ENCODE measurements at regions of chr6 and their contacts with region 1.

Region 1: DNA sequence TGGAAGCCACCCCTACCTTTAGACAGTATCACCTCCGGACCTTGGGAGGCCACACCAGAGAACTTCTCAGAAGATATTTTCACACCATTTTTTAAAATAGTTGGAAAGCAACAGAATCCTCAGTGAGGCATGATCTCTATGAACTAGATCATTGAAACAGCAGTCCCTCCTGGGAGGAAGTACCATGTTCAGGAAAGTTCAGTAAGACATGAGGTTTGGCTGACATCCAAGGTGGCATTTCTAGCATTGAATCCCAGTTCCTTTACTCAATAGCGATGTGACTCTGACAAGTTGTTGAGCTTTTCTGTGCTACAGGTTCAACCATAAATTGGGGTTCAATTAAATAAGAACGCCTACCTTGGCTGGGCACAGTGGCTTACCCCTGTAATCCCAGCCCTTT is 169.0 kb downstream of the TBC1D7 start:
- DNase-seq: no peak
- H3K4me3 ChIP-seq: no peak overlapping the region
- H3K27ac ChIP-seq: no peak overlapping the region
- H3K4me1 ChIP-seq: no peaks in the 10 kb centered on the region
- H3K27me3 ChIP-seq: no peaks in the 10 kb centered on the region
- CTCF ChIP-seq: no peak
- POLR2A ChIP-seq: no peak

Region 2: GRCh38 chr6:14192216-14192788 is 1033.0 kb after region 1 on chr6:
- intact Hi-C with region 1: loop called (anchors 10 kb)
- DNase-seq: no peak
- H3K4me3 ChIP-seq: no peak overlapping the region
- H3K27ac ChIP-seq: no peak overlapping the region
- H3K4me1 ChIP-seq: no peaks in the 10 kb centered on the region
- H3K27me3 ChIP-seq: no peaks in the 10 kb centered on the region
- CTCF ChIP-seq: no peak
- POLR2A ChIP-seq: no peak